PC-9 (cell line): ENCODE measurements at regions of chr1 and their contacts with region 1.

Region 1: DNA sequence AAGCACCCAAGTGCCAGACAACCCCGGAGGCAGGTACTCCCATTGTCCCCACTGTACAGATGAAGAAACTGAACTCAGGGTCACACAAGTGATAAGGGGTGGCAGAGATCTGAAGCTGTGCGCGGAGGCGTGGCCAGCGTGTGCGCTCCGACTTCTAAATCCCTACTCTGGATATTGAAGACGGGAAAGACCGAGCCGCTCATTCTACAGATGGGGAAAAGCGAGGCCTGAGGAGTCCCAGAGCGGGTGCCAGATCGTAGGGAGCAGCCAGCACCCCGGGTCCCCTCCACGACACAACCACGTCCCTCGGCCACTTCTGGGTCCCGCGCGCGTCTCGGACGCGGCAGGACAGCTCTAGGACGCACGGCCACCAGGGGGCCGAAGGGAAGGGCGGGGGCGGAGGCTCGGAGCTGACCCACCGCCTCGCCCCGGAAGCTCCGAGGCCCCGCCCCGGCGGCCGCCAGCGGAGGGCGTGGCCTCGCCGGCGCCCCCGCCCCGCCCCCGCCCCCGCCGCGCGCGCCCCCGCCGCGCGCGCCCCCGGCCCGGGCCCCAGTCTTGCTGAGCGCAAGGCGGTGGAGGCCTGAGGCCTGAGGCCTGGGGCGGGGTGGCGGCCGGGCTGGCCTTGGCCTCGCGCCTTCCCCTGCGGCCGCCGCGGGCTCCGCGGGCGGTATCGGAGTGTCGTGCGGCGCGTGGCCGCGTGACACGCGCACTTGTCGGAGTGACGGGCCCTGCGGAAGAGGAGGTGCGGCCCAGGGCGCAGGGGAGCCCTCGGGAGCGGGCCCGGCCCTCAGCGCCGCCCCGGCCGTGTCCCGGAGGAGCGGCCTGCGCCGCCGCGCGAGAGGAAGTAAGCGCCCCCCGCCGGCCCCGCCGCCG is at the start of gene H6PD:
- DNase-seq: peak; percentile 43 to 78
- H3K4me3 ChIP-seq: peak within 1 kb of the TSS; percentile 71
- H3K27ac ChIP-seq: peak within 1 kb of the TSS; percentile 39
- H3K4me1 ChIP-seq: peaks cover 13% of the 10 kb centered on the region
- H3K27me3 ChIP-seq: no peaks in the 10 kb centered on the region
- CTCF ChIP-seq: peak; percentile 63
- total RNA-seq, gene H6PD: 31.1 and 43.9 TPM in 2 replicates

Region 2: GRCh38 chr1:9275567-9276034 is 41.1 kb after region 1 on chr1:
- CTCF ChIA-PET with region 1: interaction called, 4 read pairs
- POLR2A ChIA-PET with region 1: interaction called, 25 read pairs
- intact Hi-C with region 1: no loop called
- DNase-seq: peak; percentile 79 to 85
- H3K4me3 ChIP-seq: no peak overlapping the region
- H3K27ac ChIP-seq: no peak overlapping the region
- H3K4me1 ChIP-seq: peaks cover 19% of the 10 kb centered on the region
- H3K27me3 ChIP-seq: no peaks in the 10 kb centered on the region
- CTCF ChIP-seq: no peak

Region 3: GRCh38 chr1:9413148-9413876 is 178.9 kb after region 1 on chr1:
- CTCF ChIA-PET with region 1: interaction called, 14 read pairs
- POLR2A ChIA-PET with region 1: no interaction called
- intact Hi-C with region 1: no loop called
- DNase-seq: peak; percentile 78 to 83
- H3K4me3 ChIP-seq: 0 out of 2 replicates have a peak overlapping the region, but pooled peaks have one; percentile 14
- H3K27ac ChIP-seq: peak overlapping the region; percentile 91
- H3K4me1 ChIP-seq: peaks cover 32% of the 10 kb centered on the region
- H3K27me3 ChIP-seq: no peaks in the 10 kb centered on the region
- CTCF ChIP-seq: no peak